ENCODE measurements at regions of chr6 and their contacts with region 1.

Region 1: GRCh38 chr6:111478749-111479148 is 4.3 kb downstream of the REV3L start:
- DNase-seq: no peak
- ATAC-seq: no peak
- H3K4me3 ChIP-seq: no peak overlapping the region
- H3K27ac ChIP-seq: no peak overlapping the region
- H3K4me1 ChIP-seq: peaks cover 0 to 3% of the 10 kb centered on the region in 2 donors
- H3K27me3 ChIP-seq: no peaks in the 10 kb centered on the region

Region 2: DNA sequence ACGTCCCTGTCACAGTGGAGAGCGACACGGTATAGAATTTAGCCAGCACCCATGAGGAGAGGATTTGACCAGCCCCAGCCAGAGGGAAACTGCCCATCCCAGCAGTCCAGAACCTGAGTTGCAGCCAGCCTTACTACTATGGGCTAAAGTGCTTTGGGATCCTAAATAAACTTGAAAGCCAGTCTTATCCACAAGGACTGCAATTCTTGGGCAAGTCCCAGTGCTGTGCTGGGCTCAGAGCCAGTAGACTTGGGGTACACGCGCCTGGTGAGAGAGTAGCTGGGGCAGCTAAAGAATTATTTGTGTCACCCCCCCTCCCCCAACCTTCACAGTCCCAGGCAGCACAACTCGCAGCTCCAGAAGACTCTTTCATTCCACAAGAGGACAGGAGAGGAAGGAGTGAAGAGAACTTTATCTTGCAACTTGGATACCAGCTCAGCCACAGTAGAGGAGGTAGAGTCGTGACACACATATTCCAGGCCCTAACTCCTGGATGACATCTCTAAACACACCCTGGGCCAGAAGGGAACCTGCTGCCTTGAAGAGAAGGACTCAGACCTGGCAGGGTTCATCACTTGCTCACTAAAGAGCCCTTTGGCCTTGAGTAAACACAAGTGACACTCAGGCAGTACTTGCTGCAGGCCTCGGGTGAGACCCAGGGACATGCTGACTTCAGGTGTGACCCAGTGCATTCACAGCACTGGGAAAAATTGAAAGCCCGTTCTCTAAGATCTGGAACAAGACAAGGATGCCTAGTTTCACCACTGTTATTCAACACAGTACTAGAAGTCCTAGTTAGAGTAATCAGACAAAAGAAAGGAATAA is 96.1 kb before region 1 on chr6:
- intact Hi-C with region 1: loop called in 1 of 2 experiments (anchors 10 kb)
- DNase-seq: peak in 1 of 2 donors; percentile 69
- ATAC-seq: peak; percentile 63
- H3K4me3 ChIP-seq: no peak overlapping the region
- H3K27ac ChIP-seq: peak overlapping the region; percentile 22 to 70
- H3K4me1 ChIP-seq: no peaks in the 10 kb centered on the region
- H3K27me3 ChIP-seq: no peaks in the 10 kb centered on the region

Measured in aorta (tissue), 5 donors.